ENCODE measurements at regions of chr12 and their contacts with region 1.

Region 1: GRCh38 chr12:123085730-123086487 is 65.0 kb downstream of the PITPNM2 start:
- DNase-seq: peak; percentile 94
- H3K4me3 ChIP-seq: no peak overlapping the region
- H3K27ac ChIP-seq: peak overlapping the region; percentile 37
- H3K4me1 ChIP-seq: peaks cover 66% of the 10 kb centered on the region
- H3K27me3 ChIP-seq: no peaks in the 10 kb centered on the region
- CTCF ChIP-seq: peak in 1 of 2 donors; percentile 38

Region 2: DNA sequence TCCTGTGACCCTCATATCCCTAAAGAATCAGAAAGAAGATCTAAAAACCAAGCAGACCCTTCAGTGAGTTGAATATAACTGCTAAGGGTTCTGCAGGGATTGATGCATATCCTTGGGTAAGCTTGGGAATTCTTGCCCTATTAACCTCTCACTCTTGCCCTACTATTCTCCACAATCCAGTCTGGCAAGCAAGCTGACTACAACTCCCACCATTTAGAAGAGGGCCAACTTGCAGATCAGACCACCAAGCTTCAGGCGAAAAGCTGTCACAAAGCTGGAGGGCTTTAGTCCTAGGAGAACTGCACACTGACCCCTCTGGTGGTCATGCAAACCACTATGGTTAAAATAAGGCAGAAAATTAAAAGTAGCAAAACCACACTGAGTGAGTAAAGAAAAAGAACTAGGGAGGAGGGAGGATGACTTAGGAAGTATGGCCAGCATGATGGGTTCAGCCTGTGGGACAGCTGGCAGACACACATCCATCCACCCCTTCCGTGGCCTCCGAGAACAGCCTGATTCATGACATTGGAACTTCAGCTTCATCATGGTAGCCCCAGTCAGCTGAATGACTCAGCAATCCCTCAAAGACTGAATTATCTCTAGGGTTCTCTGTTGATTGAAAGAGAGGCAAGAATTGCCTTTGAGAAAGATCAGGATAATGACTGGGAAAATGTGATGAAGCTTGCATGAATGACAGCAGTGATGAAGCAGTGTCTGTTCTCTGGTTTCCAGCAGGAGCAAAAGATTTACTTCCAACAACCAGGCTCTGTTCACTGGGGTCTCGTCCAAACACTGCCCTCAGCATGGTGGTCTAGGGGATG is 40.5 kb after region 1 on chr12:
- CTCF ChIA-PET with region 1: no interaction called
- dilution Hi-C with region 1: no loop called
- in situ Hi-C with region 1: no loop called
- intact Hi-C with region 1: loop called (anchors 2 kb)
- DNase-seq: peak; percentile 97
- H3K4me3 ChIP-seq: no peak overlapping the region
- H3K27ac ChIP-seq: peak overlapping the region; percentile 77
- H3K4me1 ChIP-seq: peaks cover 39% of the 10 kb centered on the region
- H3K27me3 ChIP-seq: no peaks in the 10 kb centered on the region
- CTCF ChIP-seq: no peak